CD8-positive, alpha-beta T cell (primary cell): ENCODE measurements at regions of chr7 and their contacts with region 1.

Region 1: DNA sequence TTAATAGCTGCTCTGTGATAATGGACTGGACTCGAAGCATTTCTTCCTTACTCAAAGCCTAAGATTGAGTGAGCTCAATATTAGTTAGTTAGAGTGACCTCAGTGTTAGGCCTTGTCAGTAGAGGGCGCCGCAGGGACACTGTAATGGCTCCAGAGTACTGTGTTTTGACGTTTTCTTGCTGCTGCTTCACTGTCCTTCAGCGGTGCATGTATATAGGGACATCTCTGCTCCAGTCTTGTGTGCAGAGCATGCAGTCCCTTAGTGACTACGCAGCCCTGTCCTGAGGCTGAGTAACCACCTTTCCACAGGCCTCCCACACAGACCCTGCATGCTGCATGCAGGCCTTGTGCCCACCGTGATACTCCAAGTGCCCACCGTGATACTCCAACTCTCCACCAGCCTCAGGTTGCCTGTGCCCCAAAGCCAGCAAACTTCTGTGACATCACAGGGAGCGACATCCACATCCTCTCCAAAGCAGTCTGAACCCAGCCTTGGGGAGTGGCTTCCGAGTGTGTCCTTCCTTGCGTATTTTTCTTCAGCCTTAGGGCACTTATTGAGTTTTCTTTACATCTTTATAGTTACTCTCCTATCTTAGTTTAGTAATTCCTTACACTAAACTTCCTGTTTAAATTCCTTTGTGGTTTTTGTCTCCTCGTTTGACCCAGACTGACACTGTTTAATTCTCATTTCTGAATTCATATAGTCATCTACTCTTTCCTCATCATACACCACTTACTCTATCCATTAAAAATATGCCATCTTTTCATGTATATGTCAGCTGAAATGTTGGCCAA is 118.2 kb downstream of the JAZF1 start:
- DNase-seq: peak in 8 of 9 experiments; percentile 10 to 54 (median 30)
- ATAC-seq: no peak
- H3K4me3 ChIP-seq: no peak overlapping the region
- H3K4me3 Mint-ChIP-seq: no peak overlapping the region
- H3K27ac ChIP-seq: no peak overlapping the region
- H3K27ac Mint-ChIP-seq: no peak overlapping the region
- H3K4me1 ChIP-seq: no peaks in the 10 kb centered on the region
- H3K4me1 Mint-ChIP-seq: no peaks in the 10 kb centered on the region
- H3K27me3 ChIP-seq: no peaks in the 10 kb centered on the region
- H3K27me3 Mint-ChIP-seq: peaks cover 2% of the 10 kb centered on the region
- CTCF ChIP-seq: no peak

Region 2: GRCh38 chr7:28078036-28078901 is 15.9 kb after region 1 on chr7:
- CTCF ChIA-PET with region 1: interaction called, 16 read pairs
- POLR2A ChIA-PET with region 1: no interaction called
- intact Hi-C with region 1: no loop called
- DNase-seq: peak in 8 of 9 experiments; percentile 20 to 67 (median 48)
- ATAC-seq: peak; percentile 69
- H3K4me3 ChIP-seq: no peak overlapping the region
- H3K4me3 Mint-ChIP-seq: no peak overlapping the region
- H3K27ac ChIP-seq: no peak overlapping the region
- H3K27ac Mint-ChIP-seq: no peak overlapping the region
- H3K4me1 ChIP-seq: no peaks in the 10 kb centered on the region
- H3K4me1 Mint-ChIP-seq: peaks cover 2% of the 10 kb centered on the region
- H3K27me3 ChIP-seq: no peaks in the 10 kb centered on the region
- H3K27me3 Mint-ChIP-seq: peaks cover 3% of the 10 kb centered on the region
- CTCF ChIP-seq: peak; percentile 99